ENCODE measurements at regions of chr1 and their contacts with region 1.

Region 1: GRCh38 chr1:32394141-32394889 is at the start of gene BSDC1:
- DNase-seq: peak; percentile 95 to 100 (median 99)

Region 2: GRCh38 chr1:32221980-32222755 is 172.1 kb before region 1 on chr1 and contains the starts of genes EIF3I and TMEM234:
- intact Hi-C with region 1: loop called (anchors 10 kb)
- DNase-seq: peak; percentile 85 to 98 (median 95)

Region 3: GRCh38 chr1:32351399-32352238 is 42.7 kb before region 1 on chr1:
- intact Hi-C with region 1: loop called (anchors 2 kb)
- DNase-seq: peak; percentile 80 to 97 (median 93)

Region 4: GRCh38 chr1:32501865-32502264 is 107.5 kb after region 1 on chr1:
- intact Hi-C with region 1: no loop called
- DNase-seq: no peak

Region 5: GRCh38 chr1:32650752-32651460 is 256.6 kb after region 1 on chr1 and contains the start of gene RBBP4:
- intact Hi-C with region 1: loop called (anchors 10 kb)
- DNase-seq: peak; percentile 90 to 99 (median 98)